Left ventricle myocardium inferior (tissue), 1 donor: ENCODE measurements at regions of chr3 and their contacts with region 1.

Region 1: GRCh38 chr3:67113802-67114407 is 115.8 kb downstream of the KBTBD8 start:
- DNase-seq: peak; percentile 51
- H3K4me3 ChIP-seq: no peak overlapping the region
- H3K27ac ChIP-seq: no peak overlapping the region
- H3K4me1 ChIP-seq: no peaks in the 10 kb centered on the region
- H3K27me3 ChIP-seq: peaks cover 15% of the 10 kb centered on the region
- CTCF ChIP-seq: peak; percentile 86

Region 2: GRCh38 chr3:67176396-67176795 is 62.5 kb after region 1 on chr3:
- intact Hi-C with region 1: no loop called
- DNase-seq: no peak
- H3K4me3 ChIP-seq: no peak overlapping the region
- H3K27ac ChIP-seq: no peak overlapping the region
- H3K4me1 ChIP-seq: no peaks in the 10 kb centered on the region
- H3K27me3 ChIP-seq: no peaks in the 10 kb centered on the region
- CTCF ChIP-seq: no peak

Region 3: GRCh38 chr3:68876112-68876713 is 1762.3 kb after region 1 on chr3:
- intact Hi-C with region 1: loop called (anchors 10 kb)
- DNase-seq: no peak
- H3K4me3 ChIP-seq: no peak overlapping the region
- H3K27ac ChIP-seq: no peak overlapping the region
- H3K4me1 ChIP-seq: no peaks in the 10 kb centered on the region
- H3K27me3 ChIP-seq: peaks cover 73% of the 10 kb centered on the region
- CTCF ChIP-seq: peak; percentile 90